Colonic mucosa (tissue), 4 donors: ENCODE measurements at regions of chr3 and their contacts with region 1.

Region 1: DNA sequence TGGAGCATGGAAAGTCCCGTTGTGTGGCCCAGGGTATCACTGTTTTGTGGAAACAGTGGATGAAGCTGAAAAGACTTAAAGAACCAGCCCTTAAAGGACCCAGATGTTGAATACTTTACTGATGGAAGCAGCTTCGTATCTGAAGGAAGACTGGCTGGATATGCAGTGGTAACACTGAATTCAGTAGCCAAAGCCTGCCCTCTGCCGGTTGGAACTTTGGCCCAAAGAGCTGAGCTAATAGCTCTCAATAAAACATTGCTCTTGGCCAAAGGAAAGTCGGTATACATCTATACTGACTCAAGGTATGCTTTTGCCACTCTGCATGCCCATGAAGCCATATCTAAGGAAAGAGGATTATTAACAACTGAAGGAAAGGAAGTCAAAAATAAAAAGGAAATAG is 885.4 kb downstream of the PDCD6IP start:
- DNase-seq: peak; percentile 57
- H3K4me3 ChIP-seq: no peak overlapping the region
- H3K27ac ChIP-seq: no peak overlapping the region
- H3K4me1 ChIP-seq: no peaks in the 10 kb centered on the region
- H3K27me3 ChIP-seq: no peaks in the 10 kb centered on the region
- CTCF ChIP-seq: peak; percentile 47

Region 2: GRCh38 chr3:33883951-33884561 is 799.8 kb before region 1 on chr3:
- intact Hi-C with region 1: loop called (anchors 2 kb)
- DNase-seq: no peak
- H3K4me3 ChIP-seq: no peak overlapping the region
- H3K27ac ChIP-seq: no peak overlapping the region
- H3K4me1 ChIP-seq: no peaks in the 10 kb centered on the region
- H3K27me3 ChIP-seq: no peaks in the 10 kb centered on the region
- CTCF ChIP-seq: no peak

Region 3: GRCh38 chr3:34106879-34107278 is 577.0 kb before region 1 on chr3:
- intact Hi-C with region 1: loop called (anchors 5 kb)
- DNase-seq: peak; percentile 54
- H3K4me3 ChIP-seq: no peak overlapping the region
- H3K27ac ChIP-seq: no peak overlapping the region
- H3K4me1 ChIP-seq: no peaks in the 10 kb centered on the region
- H3K27me3 ChIP-seq: no peaks in the 10 kb centered on the region
- CTCF ChIP-seq: peak; percentile 59

Region 4: GRCh38 chr3:34260271-34261006 is 423.4 kb before region 1 on chr3:
- intact Hi-C with region 1: loop called (anchors 5 kb)
- DNase-seq: peak; percentile 73
- H3K4me3 ChIP-seq: no peak overlapping the region
- H3K27ac ChIP-seq: no peak overlapping the region
- H3K4me1 ChIP-seq: no peaks in the 10 kb centered on the region
- H3K27me3 ChIP-seq: no peaks in the 10 kb centered on the region
- CTCF ChIP-seq: peak; percentile 55

Region 5: DNA sequence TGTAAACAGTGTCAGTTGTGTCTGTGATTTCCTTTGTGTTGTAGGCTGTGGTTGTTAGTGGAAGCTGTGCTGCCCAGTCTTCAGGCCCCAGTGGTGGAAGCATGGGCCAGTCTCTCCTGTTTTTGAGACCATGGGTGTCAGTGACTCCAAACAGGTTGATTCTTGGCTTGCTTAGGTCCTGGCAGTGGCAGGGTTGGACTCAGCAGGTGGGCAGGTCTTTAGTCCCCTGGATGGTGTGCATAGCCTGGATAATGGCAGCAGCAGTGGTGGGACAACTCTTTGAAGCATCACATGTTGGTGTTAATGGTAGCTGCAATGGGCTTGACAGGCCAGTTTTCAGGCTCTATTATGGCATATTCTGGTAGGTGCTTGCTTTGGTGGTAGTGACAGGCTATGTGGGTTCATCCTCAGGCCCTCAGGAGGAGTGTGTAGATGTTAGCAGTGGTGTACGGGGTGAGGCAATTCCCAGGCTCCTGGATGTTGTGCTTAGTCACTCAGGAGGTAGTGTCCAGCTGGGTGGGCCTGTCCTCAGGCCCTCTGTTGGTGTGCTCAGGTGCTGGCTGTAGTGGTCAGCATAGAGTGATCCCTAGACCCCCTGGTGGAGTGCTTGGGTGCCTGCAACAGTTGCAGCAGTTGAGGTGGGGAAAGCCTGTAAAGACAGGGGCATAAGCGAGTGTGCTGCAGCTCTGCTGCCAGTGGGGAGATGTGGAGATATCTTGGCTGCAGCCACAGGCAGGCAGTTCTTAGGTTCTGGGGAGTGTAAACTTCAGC is 288.7 kb before region 1 on chr3:
- intact Hi-C with region 1: no loop called
- DNase-seq: no peak
- H3K4me3 ChIP-seq: no peak overlapping the region
- H3K27ac ChIP-seq: no peak overlapping the region
- H3K4me1 ChIP-seq: no peaks in the 10 kb centered on the region
- H3K27me3 ChIP-seq: no peaks in the 10 kb centered on the region
- CTCF ChIP-seq: no peak